GM10248 (cell line): ENCODE measurements at regions of chr4 and their contacts with region 1.

Region 1: DNA sequence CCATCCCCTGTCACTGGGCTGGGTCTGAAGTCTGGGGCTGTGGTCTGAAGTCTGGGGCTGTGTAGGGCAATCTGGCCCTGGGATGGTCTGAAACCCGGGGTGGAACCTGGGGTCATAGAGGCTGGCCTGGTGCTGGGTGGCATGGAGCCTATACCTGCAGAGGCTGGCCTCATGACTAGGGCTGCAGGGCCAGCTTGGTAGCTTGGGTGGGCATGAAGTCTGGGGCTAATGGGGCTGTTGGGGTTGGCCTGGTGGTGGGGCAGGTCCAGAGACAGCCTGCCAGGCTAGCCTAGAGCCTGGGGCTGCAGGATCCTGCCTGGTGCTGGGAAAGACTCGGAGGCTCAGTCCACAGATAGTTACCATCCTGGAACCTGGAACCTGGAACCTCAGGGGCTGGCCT is 37.0 kb downstream of the GALNT7 start:
- DNase-seq: no peak
- CTCF ChIP-seq: no peak

Region 2: GRCh38 chr4:173178144-173178543 is 27.5 kb before region 1 on chr4:
- CTCF ChIA-PET with region 1: no interaction called
- POLR2A ChIA-PET with region 1: no interaction called
- DNase-seq: no peak
- CTCF ChIP-seq: no peak

Region 3: GRCh38 chr4:173192375-173193162 is 13.1 kb before region 1 on chr4:
- CTCF ChIA-PET with region 1: interaction called, 11 read pairs
- POLR2A ChIA-PET with region 1: no interaction called
- DNase-seq: no peak
- CTCF ChIP-seq: peak; percentile 16

Region 4: DNA sequence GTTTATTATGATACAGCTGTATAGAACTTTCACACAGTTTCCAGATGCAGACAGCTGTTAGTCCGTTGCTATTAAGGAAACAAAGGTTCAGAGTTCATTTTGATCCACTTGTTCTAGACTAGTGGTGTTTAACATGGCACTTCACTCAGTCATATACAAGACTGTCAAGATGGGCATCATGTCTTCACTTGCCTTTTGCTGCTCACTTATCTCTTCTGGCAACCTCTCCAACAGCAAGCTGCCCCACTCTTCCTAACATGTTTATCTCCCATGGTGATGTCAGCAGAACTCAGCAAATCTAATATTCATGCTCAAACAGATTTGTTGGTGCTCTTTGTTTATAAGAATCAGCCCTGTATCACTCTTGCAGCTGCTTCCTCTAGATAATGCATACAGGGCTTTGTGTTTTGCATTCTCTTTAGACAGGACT is 560.5 kb after region 1 on chr4:
- CTCF ChIA-PET with region 1: no interaction called
- POLR2A ChIA-PET with region 1: no interaction called
- DNase-seq: no peak
- CTCF ChIP-seq: no peak